Ascending aorta (tissue), 2 donors: ENCODE measurements at regions of chr3 and their contacts with region 1.

Region 1: GRCh38 chr3:23945903-23946751 is 1.0 kb downstream of the NR1D2 start:
- DNase-seq: peak; percentile 95 to 99
- H3K4me3 ChIP-seq: peak overlapping the region; percentile 96 to 98
- H3K27ac ChIP-seq: peak overlapping the region; percentile 85 to 95
- H3K4me1 ChIP-seq: peaks cover 13 to 38% of the 10 kb centered on the region in 2 donors
- H3K27me3 ChIP-seq: no peaks in the 10 kb centered on the region
- CTCF ChIP-seq: no peak

Region 2: DNA sequence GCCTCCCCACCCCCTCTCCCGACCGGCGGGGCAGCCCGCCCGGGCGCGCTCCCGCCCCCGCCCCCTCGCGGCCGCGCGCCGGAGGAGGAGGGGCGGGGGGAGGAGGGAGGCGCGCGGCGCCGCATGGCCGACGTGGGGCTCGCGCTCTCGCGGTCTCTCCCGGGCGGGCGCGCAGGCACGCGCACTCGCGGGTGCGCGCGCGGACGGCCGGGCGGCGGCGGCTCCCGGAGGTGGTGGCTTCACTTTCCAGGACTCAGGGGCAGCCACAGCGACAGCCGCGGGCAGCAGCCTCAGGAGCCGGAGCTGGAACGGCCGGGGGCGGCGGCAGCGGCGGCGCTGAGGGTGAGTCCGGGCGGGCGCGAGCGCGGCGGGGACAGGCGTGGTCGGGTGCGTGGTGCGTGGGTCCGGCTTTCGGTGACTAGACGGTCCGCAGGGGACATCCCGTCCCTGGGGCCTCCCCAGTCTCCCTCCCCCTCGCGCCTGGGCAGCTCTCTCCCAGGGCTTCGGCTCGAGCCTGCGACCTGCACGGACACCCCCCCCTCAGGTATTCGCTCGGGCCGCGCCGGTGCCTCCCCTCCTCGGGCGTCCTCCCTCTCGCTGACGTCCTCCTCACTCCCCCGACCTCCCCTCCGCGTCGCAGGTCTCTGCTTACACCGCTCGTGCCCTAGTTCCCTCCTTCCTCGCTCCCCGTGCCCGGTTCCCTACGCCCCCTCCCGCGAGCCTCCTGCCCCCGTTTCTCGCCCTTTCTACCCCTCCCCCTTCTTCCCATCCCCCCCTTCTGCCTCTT is 743.0 kb before region 1 on chr3 and contains the start of gene UBE2E2:
- intact Hi-C with region 1: loop called (anchors 10 kb)
- DNase-seq: peak in 1 of 2 donors; percentile 85
- H3K4me3 ChIP-seq: peak within 1 kb of the TSS; percentile 90 to 99
- H3K27ac ChIP-seq: peak within 1 kb of the TSS; percentile 83 to 90
- H3K4me1 ChIP-seq: peaks cover 0 to 4% of the 10 kb centered on the region in 2 donors
- H3K27me3 ChIP-seq: no peaks in the 10 kb centered on the region
- CTCF ChIP-seq: no peak
- total RNA-seq, gene UBE2E2: 5.3 TPM

Region 3: GRCh38 chr3:23916886-23917678 is 29.0 kb before region 1 on chr3 and contains the starts of genes NKIRAS1 and RPL15:
- intact Hi-C with region 1: loop called (anchors 1 kb)
- DNase-seq: peak; percentile 89 to 97
- H3K4me3 ChIP-seq: peak within 1 kb of the TSS; percentile 96 to 98
- H3K27ac ChIP-seq: peak within 1 kb of the TSS; percentile 95 to 97
- H3K4me1 ChIP-seq: peaks cover 0 to 16% of the 10 kb centered on the region in 2 donors
- H3K27me3 ChIP-seq: no peaks in the 10 kb centered on the region
- CTCF ChIP-seq: peak; percentile 47 to 63 (median 47)
- total RNA-seq, gene NKIRAS1: 8.7 TPM
- total RNA-seq, gene RPL15: 1,680 TPM

Region 4: DNA sequence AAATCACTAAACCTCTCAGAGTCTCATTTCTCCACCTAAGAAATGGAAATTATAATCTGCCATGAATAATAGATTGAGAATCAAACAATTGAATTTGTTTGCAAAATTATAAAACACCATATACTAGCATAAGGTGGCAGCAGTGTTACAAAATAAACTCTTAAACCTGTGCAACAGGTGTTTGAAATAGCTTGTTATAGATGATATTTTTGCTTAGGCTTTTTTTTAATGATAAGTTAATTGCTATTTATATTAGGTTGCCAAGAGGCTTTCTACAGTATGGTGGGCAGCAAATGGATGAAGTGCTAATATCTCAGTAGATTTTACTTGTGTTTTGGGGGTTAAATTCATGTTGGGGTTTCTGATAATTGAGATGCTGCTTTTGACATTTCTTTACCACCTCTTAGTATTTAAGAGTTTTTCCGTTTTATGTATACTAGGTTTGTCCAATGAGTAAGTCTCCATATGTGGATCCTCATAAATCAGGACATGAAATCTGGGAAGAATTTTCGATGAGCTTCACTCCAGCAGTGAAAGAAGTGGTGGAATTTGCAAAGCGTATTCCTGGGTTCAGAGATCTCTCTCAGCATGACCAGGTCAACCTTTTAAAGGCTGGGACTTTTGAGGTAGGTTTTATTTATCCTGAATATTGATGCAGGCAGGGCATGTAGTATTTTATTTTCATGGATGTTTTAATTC is 18.6 kb after region 1 on chr3:
- intact Hi-C with region 1: loop called (anchors 2 kb)
- DNase-seq: no peak
- H3K4me3 ChIP-seq: no peak overlapping the region
- H3K27ac ChIP-seq: peak overlapping the region; percentile 44 to 64
- H3K4me1 ChIP-seq: peaks cover 0 to 31% of the 10 kb centered on the region in 2 donors
- H3K27me3 ChIP-seq: no peaks in the 10 kb centered on the region
- CTCF ChIP-seq: no peak

Region 5: DNA sequence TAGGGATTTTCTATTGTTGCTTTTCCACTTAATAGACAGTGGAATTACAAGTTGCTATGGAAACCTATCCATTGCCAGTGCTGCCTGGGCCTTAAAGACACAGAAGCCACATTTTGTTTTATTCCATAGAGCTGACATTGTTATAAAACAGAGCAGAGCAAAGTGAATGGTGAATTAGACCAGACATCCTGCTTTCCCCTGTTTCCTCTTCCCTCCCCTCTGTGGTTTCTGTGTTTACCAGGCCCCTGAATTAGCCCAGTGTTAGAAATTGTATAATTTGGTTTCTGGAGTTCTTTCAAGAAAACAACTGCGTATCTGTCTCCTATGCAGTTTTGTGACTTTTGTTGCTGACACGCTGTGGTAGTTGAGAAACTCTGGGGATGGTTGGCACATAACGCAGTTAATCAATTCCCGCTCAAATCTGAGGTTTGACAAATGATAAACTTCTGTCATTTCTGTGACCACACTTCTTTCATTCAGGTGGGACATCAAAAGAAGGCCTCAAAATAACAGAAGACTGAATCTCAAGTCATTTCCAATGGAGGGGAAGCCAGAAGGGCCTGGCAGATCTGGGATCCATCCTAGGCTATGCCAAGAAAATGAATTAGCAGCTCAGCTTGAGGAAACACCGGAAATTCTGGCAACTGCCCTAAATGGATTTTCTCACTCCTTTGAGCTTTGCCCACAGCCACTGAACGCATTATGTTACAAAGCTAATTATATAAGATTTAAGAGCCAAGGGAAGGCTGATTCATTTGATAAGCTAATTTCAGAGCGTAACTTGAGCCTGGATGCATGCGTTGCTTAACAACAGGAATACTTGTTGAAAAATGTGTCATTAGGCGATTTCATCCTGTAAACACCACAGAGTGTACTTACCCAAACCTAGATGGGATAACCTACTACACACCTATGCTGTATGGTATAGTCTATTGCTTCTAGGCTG is 45.8 kb after region 1 on chr3:
- intact Hi-C with region 1: loop called (anchors 5 kb)
- DNase-seq: no peak
- H3K4me3 ChIP-seq: no peak overlapping the region
- H3K27ac ChIP-seq: peak overlapping the region; percentile 27 to 43
- H3K4me1 ChIP-seq: peaks cover 7 to 27% of the 10 kb centered on the region in 2 donors
- H3K27me3 ChIP-seq: no peaks in the 10 kb centered on the region
- CTCF ChIP-seq: no peak

Region 6: GRCh38 chr3:24042174-24043059 is 96.3 kb after region 1 on chr3:
- intact Hi-C with region 1: loop called (anchors 10 kb)
- DNase-seq: no peak
- H3K4me3 ChIP-seq: peak overlapping the region; percentile 5 to 47
- H3K27ac ChIP-seq: peak overlapping the region; percentile 91 to 94
- H3K4me1 ChIP-seq: peaks cover 8 to 51% of the 10 kb centered on the region in 2 donors
- H3K27me3 ChIP-seq: no peaks in the 10 kb centered on the region
- CTCF ChIP-seq: no peak

Region 7: GRCh38 chr3:24460974-24461373 is 514.8 kb after region 1 on chr3:
- intact Hi-C with region 1: no loop called
- DNase-seq: no peak
- H3K4me3 ChIP-seq: no peak overlapping the region
- H3K27ac ChIP-seq: peak overlapping the region; percentile 39 to 62
- H3K4me1 ChIP-seq: peaks cover 0 to 5% of the 10 kb centered on the region in 2 donors
- H3K27me3 ChIP-seq: no peaks in the 10 kb centered on the region
- CTCF ChIP-seq: no peak